OCI-LY7 (cell line): ENCODE measurements at regions of chr20 and their contacts with region 1.

Region 1: DNA sequence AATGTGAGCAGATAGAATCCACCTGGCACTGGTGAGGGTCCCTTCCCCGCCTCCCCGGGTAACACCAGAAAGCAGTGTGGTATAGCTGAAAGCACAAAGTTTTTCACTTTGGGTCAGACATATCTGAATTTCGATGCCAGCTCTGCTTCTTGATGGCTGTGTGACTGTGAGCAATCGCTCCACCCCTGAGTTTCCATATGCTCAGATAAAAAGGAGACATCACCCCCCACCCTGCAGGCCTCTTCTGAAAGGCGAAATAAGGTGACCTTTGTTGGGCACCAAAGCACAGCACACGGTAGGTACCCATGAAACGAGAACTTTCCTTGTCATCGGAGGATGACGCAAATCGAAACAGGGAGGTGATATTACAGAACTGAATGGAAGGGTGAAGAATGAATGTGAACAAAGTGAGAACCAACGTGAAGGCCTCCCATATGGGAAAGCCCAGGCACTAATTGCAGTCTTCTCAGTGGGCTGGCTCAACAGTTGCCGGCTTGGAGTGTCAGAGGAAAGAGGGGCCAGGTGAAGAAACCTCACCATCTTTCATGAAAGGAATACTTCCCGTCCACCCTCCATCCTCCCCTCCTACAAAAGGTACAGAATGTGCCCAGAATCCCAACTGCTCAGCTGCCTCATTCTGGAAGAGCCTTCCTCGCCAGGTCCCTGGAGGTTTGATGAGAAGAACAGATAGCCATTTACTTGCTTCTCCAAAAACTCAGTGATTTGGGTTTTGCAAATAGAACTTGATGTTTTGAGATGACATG is 61.8 kb downstream of the NFATC2 start:
- DNase-seq: no peak
- H3K4me3 ChIP-seq: peak overlapping the region; percentile 8
- H3K27ac ChIP-seq: peak overlapping the region; percentile 33
- H3K4me1 ChIP-seq: peaks cover 44% of the 10 kb centered on the region
- CTCF ChIP-seq: no peak

Region 2: DNA sequence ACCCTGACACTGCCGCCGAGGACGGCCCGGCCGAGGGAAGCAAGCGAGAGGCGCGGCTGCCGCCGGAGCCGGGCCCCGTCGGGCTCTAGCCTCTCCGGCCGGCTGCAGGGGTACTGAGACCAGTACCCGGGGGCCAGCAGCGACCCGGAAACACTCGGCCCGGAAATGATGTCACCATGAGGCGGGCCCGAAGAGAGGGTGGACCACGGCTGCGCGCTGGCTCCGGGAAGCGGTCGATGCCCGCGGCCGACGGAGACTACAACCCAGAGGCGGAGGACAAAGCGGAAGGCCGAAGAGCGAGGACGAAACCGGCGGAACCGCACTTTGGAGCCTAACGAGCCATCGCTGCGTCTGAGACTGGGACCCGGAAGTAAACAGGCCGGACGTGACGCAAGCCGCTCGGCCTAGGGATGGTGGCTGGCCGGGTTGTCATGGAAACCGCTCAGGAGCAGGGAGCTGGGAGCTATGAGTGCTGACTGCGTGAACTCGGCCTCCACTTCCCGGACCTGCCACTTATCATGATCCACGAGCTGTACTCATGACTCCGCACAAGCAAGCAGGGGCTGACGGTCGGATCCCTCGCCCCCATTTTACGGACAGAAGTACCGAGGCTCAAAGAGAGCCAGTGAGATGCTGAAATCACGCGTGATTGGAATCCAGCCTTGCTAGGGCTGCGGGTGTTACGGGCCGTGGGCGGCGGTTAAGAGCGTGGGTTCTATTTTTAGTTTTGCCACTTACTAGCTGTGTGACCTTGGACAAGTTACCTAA is 1565.1 kb before region 1 on chr20 and contains the start of gene SPATA2:
- CTCF ChIA-PET with region 1: no interaction called
- POLR2A ChIA-PET with region 1: no interaction called
- intact Hi-C with region 1: no loop called
- DNase-seq: peak; percentile 96
- H3K4me3 ChIP-seq: peak within 1 kb of the TSS; percentile 98
- H3K27ac ChIP-seq: peak within 1 kb of the TSS; percentile 87
- H3K4me1 ChIP-seq: peaks cover 29% of the 10 kb centered on the region
- CTCF ChIP-seq: no peak; the same call in 1 of the 2 replicates
- total RNA-seq, gene SPATA2: 3.5 and 3.9 TPM in 2 replicates

Region 3: GRCh38 chr20:50799890-50800655 is 680.6 kb before region 1 on chr20:
- CTCF ChIA-PET with region 1: interaction called, 15 read pairs
- POLR2A ChIA-PET with region 1: no interaction called
- intact Hi-C with region 1: no loop called
- DNase-seq: peak; percentile 86
- H3K4me3 ChIP-seq: peak overlapping the region; percentile 61
- H3K27ac ChIP-seq: peak overlapping the region; percentile 98
- H3K4me1 ChIP-seq: peaks cover 86% of the 10 kb centered on the region
- CTCF ChIP-seq: no peak

Region 4: GRCh38 chr20:51372176-51372803 is 108.4 kb before region 1 on chr20:
- CTCF ChIA-PET with region 1: interaction called, 17 read pairs
- POLR2A ChIA-PET with region 1: no interaction called
- intact Hi-C with region 1: no loop called
- DNase-seq: peak; percentile 81
- H3K4me3 ChIP-seq: no peak overlapping the region
- H3K27ac ChIP-seq: no peak overlapping the region
- H3K4me1 ChIP-seq: peaks cover 22% of the 10 kb centered on the region
- CTCF ChIP-seq: peak; percentile 91

Region 5: DNA sequence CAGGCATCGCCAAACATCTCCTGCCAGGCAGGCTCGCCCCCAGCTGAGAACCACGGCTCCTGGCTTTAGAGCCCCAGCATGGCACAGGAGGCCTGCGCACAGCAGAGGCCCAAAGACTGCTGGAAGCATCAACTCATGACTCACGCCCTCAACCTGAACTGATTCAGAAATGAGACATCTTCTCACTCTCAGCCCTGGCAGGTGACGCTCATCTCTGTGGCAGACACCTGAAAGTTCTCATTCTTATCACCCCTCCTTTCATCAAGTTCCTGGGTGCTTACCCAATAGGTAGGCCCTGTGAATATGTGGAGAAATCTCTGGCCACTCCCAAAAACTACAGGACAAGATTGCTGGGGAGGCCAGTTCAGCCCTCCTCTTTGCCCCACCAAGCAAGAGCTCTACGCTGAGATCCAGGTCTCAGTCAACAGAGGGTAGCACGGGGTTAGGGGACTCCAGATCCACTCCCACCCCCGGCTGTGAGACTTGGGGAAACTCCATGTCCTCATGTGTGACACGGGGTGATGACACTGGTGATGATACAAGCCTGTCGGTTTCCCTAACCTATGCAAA is 50.5 kb after region 1 on chr20:
- CTCF ChIA-PET with region 1: no interaction called
- POLR2A ChIA-PET with region 1: no interaction called
- intact Hi-C with region 1: no loop called
- DNase-seq: no peak
- H3K4me3 ChIP-seq: no peak overlapping the region
- H3K27ac ChIP-seq: peak overlapping the region; percentile 15
- H3K4me1 ChIP-seq: peaks cover 89% of the 10 kb centered on the region
- CTCF ChIP-seq: no peak

Region 6: GRCh38 chr20:51899668-51900067 is 419.0 kb after region 1 on chr20:
- CTCF ChIA-PET with region 1: no interaction called
- POLR2A ChIA-PET with region 1: no interaction called
- intact Hi-C with region 1: no loop called
- DNase-seq: no peak
- H3K4me3 ChIP-seq: no peak overlapping the region
- H3K27ac ChIP-seq: no peak overlapping the region
- H3K4me1 ChIP-seq: no peaks in the 10 kb centered on the region
- CTCF ChIP-seq: no peak